Naive thymus-derived CD4-positive, alpha-beta T cell (primary cell): ENCODE measurements at regions of chr19 and their contacts with region 1.

Region 1: DNA sequence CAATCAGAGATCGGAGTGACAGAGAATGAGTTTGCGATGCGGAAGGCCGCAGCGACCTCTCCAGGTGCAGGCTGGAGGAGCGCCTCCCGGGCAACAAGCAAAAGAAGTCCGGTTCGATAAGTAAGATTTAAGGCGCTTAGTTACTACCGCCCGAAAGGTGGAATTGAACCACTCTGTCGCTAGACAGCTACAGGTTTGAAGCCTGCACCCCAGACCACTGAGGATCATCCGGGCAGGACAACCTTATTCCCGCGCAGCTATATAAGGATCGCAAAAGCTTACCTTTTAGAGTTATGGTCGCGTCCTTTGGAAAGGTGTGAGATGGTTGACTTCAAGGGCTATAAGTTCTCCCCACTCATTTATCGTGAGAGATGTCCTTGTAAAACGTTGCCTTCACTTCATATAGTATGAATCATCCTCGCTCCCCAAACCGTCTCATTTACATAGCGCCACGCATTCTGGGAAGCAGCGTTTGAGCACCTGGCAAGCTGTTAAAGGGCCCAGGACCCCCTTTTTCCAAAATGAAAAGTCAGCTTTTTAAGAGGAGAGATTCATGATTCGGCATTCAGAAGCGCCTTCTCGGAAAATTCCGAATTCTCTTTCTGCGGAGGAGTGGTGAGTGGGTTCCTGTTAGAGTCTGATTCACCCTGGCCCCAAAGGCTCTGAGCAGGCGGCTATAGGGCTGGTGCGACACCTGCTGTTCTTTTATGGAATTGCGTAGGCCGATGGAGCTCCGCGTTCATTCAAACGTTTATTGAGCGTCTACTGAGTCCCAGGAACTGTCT is 10.8 kb downstream of the FOSB start:
- DNase-seq: peak; percentile 77 to 94 (median 91)
- ATAC-seq: peak; percentile 62
- H3K4me3 ChIP-seq: peak overlapping the region; percentile 78
- H3K4me3 Mint-ChIP-seq: peak overlapping the region; percentile 62 to 96 (median 79)
- H3K27ac ChIP-seq: peak overlapping the region; percentile 94
- H3K27ac Mint-ChIP-seq: peak overlapping the region; percentile 95 to 100 (median 99)
- H3K4me1 ChIP-seq: peaks cover 7 to 11% of the 10 kb centered on the region in 2 donors
- H3K4me1 Mint-ChIP-seq: peaks cover 23 to 43% (median 33%) of the 10 kb centered on the region in 7 donors
- H3K27me3 ChIP-seq: no peaks in the 10 kb centered on the region
- H3K27me3 Mint-ChIP-seq: peaks cover 0 to 38% (median 6%) of the 10 kb centered on the region in 5 donors

Region 2: GRCh38 chr19:44746946-44747738 is 731.5 kb before region 1 on chr19:
- CTCF ChIA-PET with region 1: no interaction called
- POLR2A ChIA-PET with region 1: no interaction called
- intact Hi-C with region 1: loop called in 1 of 2 experiments (anchors 5 kb)
- DNase-seq: peak; percentile 51 to 97 (median 61)
- ATAC-seq: peak; percentile 83
- H3K4me3 ChIP-seq: peak overlapping the region; percentile 91
- H3K4me3 Mint-ChIP-seq: peak overlapping the region; percentile 90 to 99 (median 92)
- H3K27ac ChIP-seq: peak overlapping the region; percentile 97
- H3K27ac Mint-ChIP-seq: peak overlapping the region; percentile 87 to 99 (median 94)
- H3K4me1 ChIP-seq: peaks cover 23 to 33% of the 10 kb centered on the region in 2 donors
- H3K4me1 Mint-ChIP-seq: peaks cover 35 to 56% (median 55%) of the 10 kb centered on the region in 7 donors
- H3K27me3 ChIP-seq: no peaks in the 10 kb centered on the region
- H3K27me3 Mint-ChIP-seq: peaks cover 0 to 3% (median 0%) of the 10 kb centered on the region in 5 donors

Region 3: GRCh38 chr19:45423589-45424190 is 55.0 kb before region 1 on chr19 and contains the start of gene ERCC1:
- CTCF ChIA-PET with region 1: interaction called, 8 read pairs
- POLR2A ChIA-PET with region 1: no interaction called
- intact Hi-C with region 1: loop called (anchors 1 kb)
- DNase-seq: peak in 7 of 9 donors; percentile 25 to 83 (median 52)
- ATAC-seq: peak; percentile 71
- H3K4me3 ChIP-seq: peak within 1 kb of the TSS; percentile 72
- H3K4me3 Mint-ChIP-seq: peak within 1 kb of the TSS; percentile 88 to 100 (median 94)
- H3K27ac ChIP-seq: peak within 1 kb of the TSS; percentile 77
- H3K27ac Mint-ChIP-seq: peak within 1 kb of the TSS; percentile 83 to 97 (median 91)
- H3K4me1 ChIP-seq: peaks cover 24 to 28% of the 10 kb centered on the region in 2 donors
- H3K4me1 Mint-ChIP-seq: peaks cover 22 to 57% (median 50%) of the 10 kb centered on the region in 7 donors
- H3K27me3 ChIP-seq: peaks cover 0 to 3% of the 10 kb centered on the region in 2 donors
- H3K27me3 Mint-ChIP-seq: peaks cover 0 to 10% (median 3%) of the 10 kb centered on the region in 5 donors
- total RNA-seq, gene ERCC1: 45.1 to 88.2 (median 53.4) TPM

Region 4: GRCh38 chr19:45439569-45440254 is 38.9 kb before region 1 on chr19:
- CTCF ChIA-PET with region 1: interaction called, 217 read pairs
- POLR2A ChIA-PET with region 1: interaction called, 64 read pairs
- intact Hi-C with region 1: loop called (anchors 1 kb)
- DNase-seq: peak; percentile 75 to 95 (median 86)
- ATAC-seq: peak; percentile 72
- H3K4me3 ChIP-seq: peak overlapping the region; percentile 57
- H3K4me3 Mint-ChIP-seq: peak overlapping the region; percentile 68 to 83 (median 77)
- H3K27ac ChIP-seq: peak overlapping the region; percentile 69
- H3K27ac Mint-ChIP-seq: peak overlapping the region in 4 of 9 donors; percentile 51 to 91 (median 74)
- H3K4me1 ChIP-seq: peaks cover 24% of the 10 kb centered on the region in 2 donors
- H3K4me1 Mint-ChIP-seq: peaks cover 26 to 35% (median 33%) of the 10 kb centered on the region in 7 donors
- H3K27me3 ChIP-seq: no peaks in the 10 kb centered on the region
- H3K27me3 Mint-ChIP-seq: peaks cover 0 to 5% (median 0%) of the 10 kb centered on the region in 5 donors

Region 5: DNA sequence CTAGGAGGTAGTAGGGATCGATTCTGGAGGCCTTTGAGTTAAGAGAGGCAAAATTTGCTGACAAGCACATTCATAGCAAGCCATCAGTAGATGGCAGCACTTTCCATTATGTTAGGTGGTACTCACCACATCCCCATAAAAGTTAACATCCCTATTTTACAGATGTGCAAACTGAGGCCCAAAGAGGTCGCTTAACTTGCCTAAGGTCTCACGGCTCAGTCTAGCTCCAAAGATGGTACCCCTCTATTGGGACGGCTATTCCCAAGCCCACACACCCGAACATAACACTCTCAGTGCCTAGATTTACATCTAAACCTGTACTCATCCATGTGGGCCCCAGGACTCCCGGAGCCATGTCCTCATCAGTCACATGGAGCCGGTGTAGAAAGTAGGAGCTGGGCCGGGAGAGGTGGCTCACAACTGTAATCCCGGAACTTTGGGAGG is 32.3 kb before region 1 on chr19:
- CTCF ChIA-PET with region 1: interaction called, 217 read pairs
- POLR2A ChIA-PET with region 1: interaction called, 6 read pairs
- intact Hi-C with region 1: loop called in 1 of 2 experiments (anchors 1 kb)
- DNase-seq: no peak
- ATAC-seq: no peak
- H3K4me3 ChIP-seq: no peak overlapping the region
- H3K4me3 Mint-ChIP-seq: peak overlapping the region in 4 of 10 donors; percentile 21 to 56 (median 31)
- H3K27ac ChIP-seq: no peak overlapping the region
- H3K27ac Mint-ChIP-seq: peak overlapping the region in 6 of 9 donors; percentile 44 to 89 (median 64)
- H3K4me1 ChIP-seq: peaks cover 29 to 34% of the 10 kb centered on the region in 2 donors
- H3K4me1 Mint-ChIP-seq: peaks cover 30 to 67% (median 56%) of the 10 kb centered on the region in 7 donors
- H3K27me3 ChIP-seq: no peaks in the 10 kb centered on the region
- H3K27me3 Mint-ChIP-seq: peaks cover 0 to 6% (median 0%) of the 10 kb centered on the region in 5 donors

Region 6: GRCh38 chr19:45496349-45496953 is 17.8 kb after region 1 on chr19:
- CTCF ChIA-PET with region 1: interaction called, 11 read pairs
- POLR2A ChIA-PET with region 1: interaction called, 7 read pairs
- intact Hi-C with region 1: loop called in 1 of 2 experiments (anchors 1 kb)
- DNase-seq: peak in 7 of 9 donors; percentile 44 to 75 (median 55)
- ATAC-seq: peak; percentile 33
- H3K4me3 ChIP-seq: peak overlapping the region; percentile 65
- H3K4me3 Mint-ChIP-seq: peak overlapping the region; percentile 72 to 97 (median 77)
- H3K27ac ChIP-seq: no peak overlapping the region
- H3K27ac Mint-ChIP-seq: peak overlapping the region in 4 of 9 donors; percentile 12 to 87 (median 48)
- H3K4me1 ChIP-seq: peaks cover 28 to 38% of the 10 kb centered on the region in 2 donors
- H3K4me1 Mint-ChIP-seq: peaks cover 28 to 52% (median 48%) of the 10 kb centered on the region in 7 donors
- H3K27me3 ChIP-seq: no peaks in the 10 kb centered on the region
- H3K27me3 Mint-ChIP-seq: peaks cover 12 to 37% (median 19%) of the 10 kb centered on the region in 5 donors

Region 7: GRCh38 chr19:45782820-45783785 is 304.5 kb after region 1 on chr19:
- CTCF ChIA-PET with region 1: no interaction called
- POLR2A ChIA-PET with region 1: no interaction called
- intact Hi-C with region 1: no loop called
- DNase-seq: no peak
- ATAC-seq: no peak
- H3K4me3 ChIP-seq: no peak overlapping the region
- H3K4me3 Mint-ChIP-seq: no peak overlapping the region
- H3K27ac ChIP-seq: no peak overlapping the region
- H3K27ac Mint-ChIP-seq: no peak overlapping the region
- H3K4me1 ChIP-seq: peaks cover 7 to 17% of the 10 kb centered on the region in 2 donors
- H3K4me1 Mint-ChIP-seq: peaks cover 13 to 29% (median 18%) of the 10 kb centered on the region in 7 donors
- H3K27me3 ChIP-seq: peaks cover 0 to 18% of the 10 kb centered on the region in 2 donors
- H3K27me3 Mint-ChIP-seq: peaks cover 15 to 48% (median 33%) of the 10 kb centered on the region in 5 donors